ENCODE measurements at regions of chr5 and their contacts with region 1.

Region 1: GRCh38 chr5:157558041-157558595 is 17.5 kb downstream of the ADAM19 start:
- DNase-seq: peak; percentile 92
- ATAC-seq: peak; percentile 85
- H3K4me3 ChIP-seq: peak overlapping the region; percentile 19; the same call in 1 of the 2 replicates
- H3K27ac ChIP-seq: peak overlapping the region; percentile 88
- H3K4me1 ChIP-seq: peaks cover 59% of the 10 kb centered on the region
- H3K27me3 ChIP-seq: no peaks in the 10 kb centered on the region
- CTCF ChIP-seq: no peak

Region 2: GRCh38 chr5:157540707-157541446 is 17.2 kb before region 1 on chr5:
- CTCF ChIA-PET with region 1: no interaction called
- POLR2A ChIA-PET with region 1: no interaction called
- intact Hi-C with region 1: no loop called
- DNase-seq: no peak
- ATAC-seq: no peak
- H3K4me3 ChIP-seq: no peak overlapping the region
- H3K27ac ChIP-seq: no peak overlapping the region
- H3K4me1 ChIP-seq: peaks cover 7% of the 10 kb centered on the region; the same call in 1 of the 2 replicates
- H3K27me3 ChIP-seq: no peaks in the 10 kb centered on the region
- CTCF ChIP-seq: no peak

Region 3: DNA sequence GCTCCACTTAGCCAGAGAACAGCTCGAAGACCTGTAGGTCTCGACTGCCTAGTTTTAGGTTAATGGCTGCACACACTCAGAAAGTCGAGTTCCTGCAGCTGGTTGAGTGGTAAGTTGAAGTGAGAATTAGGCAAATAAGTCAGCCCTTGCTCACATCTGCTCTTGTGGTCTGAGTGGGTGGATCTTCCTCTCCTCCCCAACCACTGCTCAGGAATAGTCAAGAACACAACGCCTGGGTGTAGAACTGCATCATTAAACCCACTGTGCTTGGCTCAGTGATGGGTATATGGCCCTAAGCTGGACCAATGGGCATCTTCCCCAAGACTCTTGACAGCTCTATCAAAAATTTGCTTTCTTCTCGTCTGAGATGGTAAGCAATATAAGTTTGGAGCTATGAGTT is 38.4 kb after region 1 on chr5:
- CTCF ChIA-PET with region 1: interaction called, 12 read pairs
- POLR2A ChIA-PET with region 1: no interaction called
- intact Hi-C with region 1: no loop called
- DNase-seq: no peak
- ATAC-seq: no peak
- H3K4me3 ChIP-seq: no peak overlapping the region
- H3K27ac ChIP-seq: no peak overlapping the region
- H3K4me1 ChIP-seq: peaks cover 21% of the 10 kb centered on the region
- H3K27me3 ChIP-seq: no peaks in the 10 kb centered on the region
- CTCF ChIP-seq: no peak

Measured in PC-3 (cell line).